ENCODE measurements at regions of chr3 and their contacts with region 1.

Region 1: GRCh38 chr3:47996440-47996839 is 19.8 kb downstream of the MAP4 start:
- DNase-seq: no peak
- H3K4me3 ChIP-seq: no peak overlapping the region
- H3K27ac ChIP-seq: peak overlapping the region; percentile 14 to 77
- H3K4me1 ChIP-seq: peaks cover 9 to 35% of the 10 kb centered on the region in 2 donors
- H3K27me3 ChIP-seq: no peaks in the 10 kb centered on the region
- CTCF ChIP-seq: no peak

Region 2: GRCh38 chr3:48047841-48048456 is 51.5 kb after region 1 on chr3:
- intact Hi-C with region 1: loop called (anchors 5 kb)
- DNase-seq: no peak
- H3K4me3 ChIP-seq: no peak overlapping the region
- H3K27ac ChIP-seq: no peak overlapping the region
- H3K4me1 ChIP-seq: no peaks in the 10 kb centered on the region
- H3K27me3 ChIP-seq: no peaks in the 10 kb centered on the region
- CTCF ChIP-seq: no peak

Measured in ascending aorta (tissue), 2 donors.